ENCODE measurements at regions of chr18 and their contacts with region 1.

Region 1: DNA sequence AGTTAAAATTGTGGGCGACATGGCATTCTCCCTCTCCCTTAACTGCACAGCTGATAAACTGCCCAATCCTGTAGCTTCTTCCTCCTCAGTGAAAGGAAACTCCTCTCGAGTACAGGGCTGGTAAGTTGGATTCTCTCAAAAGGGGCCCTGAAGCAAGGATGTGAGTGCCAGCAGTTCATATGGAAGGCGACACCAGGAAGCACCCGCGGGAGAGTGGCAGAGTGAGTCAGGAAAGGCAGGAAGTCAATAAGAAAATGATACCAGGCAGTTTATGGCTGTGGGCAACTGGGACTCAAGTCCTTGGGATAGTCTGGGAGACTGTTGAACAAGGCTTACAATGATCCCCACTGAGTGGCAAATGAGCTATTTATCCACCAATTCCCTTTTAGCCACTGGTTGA is 34.8 kb downstream of the ABHD3 start:
- DNase-seq: peak; percentile 61
- H3K4me3 ChIP-seq: no peak overlapping the region
- H3K27ac ChIP-seq: peak overlapping the region; percentile 41
- H3K4me1 ChIP-seq: peaks cover 13% of the 10 kb centered on the region
- H3K27me3 ChIP-seq: no peaks in the 10 kb centered on the region
- CTCF ChIP-seq: no peak
- POLR2A ChIP-seq: no peak

Region 2: DNA sequence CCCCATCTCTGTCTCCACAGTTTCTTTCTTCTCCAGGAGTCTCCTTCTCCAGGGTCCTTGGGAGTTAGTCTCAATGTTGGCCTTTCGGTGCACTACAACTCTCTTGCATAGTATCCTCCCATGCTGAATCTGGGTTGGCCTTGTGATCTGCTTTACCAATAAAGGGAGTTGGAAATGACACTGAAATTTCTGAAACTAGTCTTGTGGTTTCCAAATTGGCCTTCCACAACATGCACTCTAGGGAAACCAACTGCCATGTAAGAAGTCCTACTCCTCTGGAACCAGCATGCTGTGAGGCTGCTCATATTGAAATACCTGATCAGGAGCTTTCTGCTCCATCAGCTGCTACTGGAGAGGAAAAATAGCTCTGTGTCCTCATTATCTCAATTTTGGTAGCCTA is 44.7 kb after region 1 on chr18:
- CTCF ChIA-PET with region 1: no interaction called
- POLR2A ChIA-PET with region 1: no interaction called
- dilution Hi-C with region 1: no loop called
- intact Hi-C with region 1: loop called (anchors 5 kb)
- DNase-seq: no peak
- H3K4me3 ChIP-seq: no peak overlapping the region
- H3K27ac ChIP-seq: no peak overlapping the region
- H3K4me1 ChIP-seq: no peaks in the 10 kb centered on the region
- H3K27me3 ChIP-seq: peaks cover 0 to 3% of the 10 kb centered on the region in 2 experiments
- CTCF ChIP-seq: no peak
- POLR2A ChIP-seq: no peak